HAP-1 (cell line): ENCODE measurements at regions of chr4 and their contacts with region 1.

Region 1: GRCh38 chr4:144645631-144646522 is at the start of gene HHIP:
- DNase-seq: peak; percentile 73 to 75
- H3K4me3 ChIP-seq: peak within 1 kb of the TSS; percentile 40
- H3K4me1 ChIP-seq: peaks cover 31% of the 10 kb centered on the region
- H3K27me3 ChIP-seq: no peaks in the 10 kb centered on the region

Region 2: DNA sequence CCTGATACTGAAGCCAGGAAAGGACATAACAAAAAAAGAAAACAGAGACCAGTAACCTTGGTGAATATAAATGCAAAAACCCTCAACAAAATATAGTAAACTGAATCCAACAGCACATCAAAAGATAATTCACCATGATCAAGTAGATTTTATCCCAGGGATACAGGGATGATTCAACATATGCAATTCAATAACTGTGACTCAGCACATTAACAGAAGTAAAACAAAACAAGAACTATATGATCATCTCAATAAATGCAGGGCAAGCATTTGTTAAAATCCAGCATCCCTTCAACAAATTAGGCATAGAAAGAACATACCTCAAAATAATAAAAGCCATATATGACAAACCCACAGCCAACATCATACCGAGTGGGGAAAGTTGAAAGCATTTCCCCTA is 112.1 kb after region 1 on chr4:
- in situ Hi-C with region 1: loop called (anchors 10 kb)
- DNase-seq: no peak
- H3K4me3 ChIP-seq: no peak overlapping the region
- H3K4me1 ChIP-seq: no peaks in the 10 kb centered on the region
- H3K27me3 ChIP-seq: no peaks in the 10 kb centered on the region